ENCODE measurements at regions of chr10 and their contacts with region 1.

Region 1: GRCh38 chr10:63521416-63522276 is 445 bp downstream of the REEP3 start:
- DNase-seq: peak; percentile 49
- H3K4me3 Mint-ChIP-seq: peak overlapping the region; percentile 83
- H3K27ac Mint-ChIP-seq: peak overlapping the region; percentile 88
- H3K4me1 Mint-ChIP-seq: peaks cover 63% of the 10 kb centered on the region
- H3K27me3 Mint-ChIP-seq: no peaks in the 10 kb centered on the region

Region 2: GRCh38 chr10:63173468-63174232 is 348.0 kb before region 1 on chr10:
- intact Hi-C with region 1: loop called (anchors 2 kb)
- DNase-seq: no peak
- H3K4me3 Mint-ChIP-seq: peak overlapping the region; percentile 61
- H3K27ac Mint-ChIP-seq: peak overlapping the region; percentile 86
- H3K4me1 Mint-ChIP-seq: peaks cover 78% of the 10 kb centered on the region
- H3K27me3 Mint-ChIP-seq: no peaks in the 10 kb centered on the region

Region 3: GRCh38 chr10:63355682-63356081 is 166.0 kb before region 1 on chr10:
- intact Hi-C with region 1: loop called (anchors 1 kb)
- DNase-seq: no peak
- H3K4me3 Mint-ChIP-seq: no peak overlapping the region
- H3K27ac Mint-ChIP-seq: peak overlapping the region; percentile 54
- H3K4me1 Mint-ChIP-seq: peaks cover 14% of the 10 kb centered on the region
- H3K27me3 Mint-ChIP-seq: no peaks in the 10 kb centered on the region

Region 4: DNA sequence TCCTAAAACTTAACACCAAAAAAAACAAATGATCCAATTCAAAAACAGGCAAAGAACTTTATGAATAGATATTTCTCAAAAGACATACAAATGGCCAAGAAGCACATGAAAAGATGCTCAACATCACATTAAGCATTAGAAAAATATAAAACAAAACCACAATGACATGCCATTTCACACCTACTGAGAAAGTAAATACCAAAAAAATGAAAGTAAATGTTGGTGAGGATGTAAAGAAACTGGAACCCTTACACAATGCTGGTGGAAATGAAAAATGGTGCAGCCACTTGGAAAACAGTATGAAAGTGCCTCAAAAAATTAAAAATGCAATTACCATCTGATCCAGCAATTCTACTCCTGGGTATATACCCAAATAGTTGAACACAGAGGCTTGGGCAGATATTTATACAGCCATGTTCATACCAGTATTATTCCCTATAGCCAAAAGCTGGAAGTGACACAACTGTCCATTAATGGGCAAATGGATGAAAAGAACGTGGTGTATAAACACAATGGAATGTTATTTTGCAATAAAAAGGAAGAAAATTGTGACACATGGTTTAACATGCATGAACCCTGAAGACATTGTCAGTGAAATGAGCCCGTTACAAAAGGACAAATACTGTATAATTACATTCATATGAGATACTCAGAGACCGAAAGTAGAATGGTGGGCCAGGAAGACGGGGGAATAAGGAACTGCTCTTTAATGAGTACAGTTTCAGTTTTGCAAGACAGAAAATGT is 144.9 kb before region 1 on chr10:
- intact Hi-C with region 1: no loop called
- DNase-seq: no peak
- H3K4me3 Mint-ChIP-seq: no peak overlapping the region
- H3K27ac Mint-ChIP-seq: no peak overlapping the region
- H3K4me1 Mint-ChIP-seq: peaks cover 14% of the 10 kb centered on the region
- H3K27me3 Mint-ChIP-seq: peaks cover 2% of the 10 kb centered on the region

Region 5: GRCh38 chr10:63409465-63410027 is 112.1 kb before region 1 on chr10:
- intact Hi-C with region 1: no loop called
- DNase-seq: no peak
- H3K4me3 Mint-ChIP-seq: no peak overlapping the region
- H3K27ac Mint-ChIP-seq: no peak overlapping the region
- H3K4me1 Mint-ChIP-seq: peaks cover 17% of the 10 kb centered on the region
- H3K27me3 Mint-ChIP-seq: no peaks in the 10 kb centered on the region

Region 6: GRCh38 chr10:63465293-63466143 is 56.1 kb before region 1 on chr10 and contains the start of gene JMJD1C:
- intact Hi-C with region 1: loop called (anchors 2 kb)
- DNase-seq: peak; percentile 47
- H3K4me3 Mint-ChIP-seq: peak within 1 kb of the TSS; percentile 90
- H3K27ac Mint-ChIP-seq: peak within 1 kb of the TSS; percentile 68
- H3K4me1 Mint-ChIP-seq: peaks cover 21% of the 10 kb centered on the region
- H3K27me3 Mint-ChIP-seq: peaks cover 28% of the 10 kb centered on the region
- total RNA-seq, gene JMJD1C: 47.3 and 48.0 TPM in 2 replicates

Region 7: DNA sequence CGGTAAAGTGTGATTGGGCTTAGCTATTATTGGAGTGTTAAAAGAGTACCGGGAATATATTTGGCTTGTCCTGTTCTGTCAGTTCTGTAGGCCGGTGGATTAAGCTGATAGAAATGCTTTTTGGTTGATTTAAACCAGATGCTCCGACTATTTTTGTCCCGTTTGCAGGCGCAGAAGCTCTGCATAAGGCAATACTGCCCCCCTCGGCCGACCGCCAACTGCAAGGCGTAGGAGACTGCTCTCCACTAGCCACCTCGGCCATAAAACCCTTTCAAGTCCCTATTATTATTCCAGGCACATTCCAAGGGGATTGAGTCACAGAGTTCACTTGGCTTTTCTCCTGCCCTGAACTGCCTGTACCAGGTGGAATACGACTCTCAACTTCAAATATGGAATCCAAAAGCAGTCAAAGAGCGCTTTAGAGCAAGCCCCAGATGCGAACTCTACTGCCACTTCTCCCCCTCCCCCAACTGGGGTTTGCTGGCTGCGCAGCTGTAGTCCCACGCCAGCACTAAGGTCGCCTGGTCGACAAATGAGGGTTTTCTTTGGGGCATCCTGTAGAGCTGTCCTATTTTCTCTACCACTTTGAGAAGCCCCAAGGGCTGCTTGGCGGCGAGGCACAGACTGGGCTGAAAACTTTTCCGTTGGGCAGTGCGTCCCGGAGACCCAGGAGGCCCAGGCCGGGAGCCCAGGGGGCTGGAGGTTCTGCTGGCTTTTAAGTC is 107.9 kb after region 1 on chr10:
- intact Hi-C with region 1: loop called (anchors 1 kb)
- DNase-seq: peak; percentile 71
- H3K4me3 Mint-ChIP-seq: peak overlapping the region; percentile 89
- H3K27ac Mint-ChIP-seq: peak overlapping the region; percentile 90
- H3K4me1 Mint-ChIP-seq: peaks cover 37% of the 10 kb centered on the region
- H3K27me3 Mint-ChIP-seq: no peaks in the 10 kb centered on the region